ENCODE measurements at regions of chr16 and their contacts with region 1.

Region 1: GRCh38 chr16:2155091-2156021 is at the start of gene TRAF7:
- DNase-seq: peak; percentile 100
- H3K4me3 ChIP-seq: peak within 1 kb of the TSS; percentile 58 to 80 (median 76)
- H3K27ac ChIP-seq: peak within 1 kb of the TSS; percentile 90 to 96 (median 94)
- H3K4me1 ChIP-seq: peaks cover 0 to 90% (median 84%) of the 10 kb centered on the region in 4 donors
- H3K27me3 ChIP-seq: no peaks in the 10 kb centered on the region
- CTCF ChIP-seq: no peak
- EP300 ChIP-seq: peak in 1 of 4 donors; percentile 59
- POLR2A ChIP-seq: peak; percentile 100
- total RNA-seq, gene TRAF7: 30.3 to 46.3 (median 34.9) TPM

Region 2: DNA sequence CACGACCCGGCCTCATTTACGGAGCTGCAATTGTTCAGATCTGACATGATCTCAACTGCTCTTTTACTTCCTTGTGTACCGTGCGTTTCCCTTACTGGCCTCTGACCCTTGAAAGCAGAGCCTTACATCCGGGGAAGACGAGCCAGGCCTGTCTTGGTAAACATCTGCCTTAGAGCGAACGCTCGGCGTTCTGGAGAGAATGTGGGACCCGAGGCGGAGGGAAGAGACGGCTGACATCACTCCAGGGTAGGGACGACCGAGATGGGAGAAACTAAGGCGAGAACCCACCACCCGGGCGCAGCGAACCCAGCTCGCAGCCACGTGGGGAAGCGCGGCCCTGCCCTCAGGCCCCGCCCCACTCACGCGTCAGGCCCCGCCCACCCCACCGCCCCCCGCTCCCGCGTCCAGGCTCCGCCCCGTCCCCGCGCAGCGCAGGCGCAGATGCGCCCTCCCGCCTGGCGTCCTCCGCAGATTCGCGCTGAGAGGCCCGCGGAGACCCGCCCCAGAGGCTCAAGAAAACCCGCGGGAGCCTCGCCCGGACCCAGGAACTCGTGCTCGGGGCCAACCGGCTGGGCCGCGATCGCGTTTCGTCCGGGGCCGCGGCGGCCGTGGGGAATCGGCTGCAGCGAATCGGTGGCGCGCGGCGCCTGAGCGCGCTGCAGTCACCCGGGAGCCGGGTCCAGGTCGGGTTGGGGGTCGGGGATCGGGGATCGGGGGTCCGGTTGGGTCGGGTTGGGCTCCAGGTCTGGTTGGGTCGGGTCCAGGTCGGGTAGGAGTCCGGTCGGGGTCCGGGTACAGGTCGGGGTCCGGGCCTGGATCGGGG is 662.2 kb before region 1 on chr16 and contains the start of gene TELO2:
- intact Hi-C with region 1: no loop called
- DNase-seq: peak; percentile 89
- H3K4me3 ChIP-seq: peak within 1 kb of the TSS; percentile 72 to 84 (median 79)
- H3K27ac ChIP-seq: peak within 1 kb of the TSS; percentile 87 to 93 (median 88)
- H3K4me1 ChIP-seq: peaks cover 0 to 30% (median 25%) of the 10 kb centered on the region in 4 donors
- H3K27me3 ChIP-seq: no peaks in the 10 kb centered on the region
- CTCF ChIP-seq: no peak
- EP300 ChIP-seq: no peak
- POLR2A ChIP-seq: no peak
- total RNA-seq, gene TELO2: 12.5 to 31.3 (median 18.1) TPM

Region 3: DNA sequence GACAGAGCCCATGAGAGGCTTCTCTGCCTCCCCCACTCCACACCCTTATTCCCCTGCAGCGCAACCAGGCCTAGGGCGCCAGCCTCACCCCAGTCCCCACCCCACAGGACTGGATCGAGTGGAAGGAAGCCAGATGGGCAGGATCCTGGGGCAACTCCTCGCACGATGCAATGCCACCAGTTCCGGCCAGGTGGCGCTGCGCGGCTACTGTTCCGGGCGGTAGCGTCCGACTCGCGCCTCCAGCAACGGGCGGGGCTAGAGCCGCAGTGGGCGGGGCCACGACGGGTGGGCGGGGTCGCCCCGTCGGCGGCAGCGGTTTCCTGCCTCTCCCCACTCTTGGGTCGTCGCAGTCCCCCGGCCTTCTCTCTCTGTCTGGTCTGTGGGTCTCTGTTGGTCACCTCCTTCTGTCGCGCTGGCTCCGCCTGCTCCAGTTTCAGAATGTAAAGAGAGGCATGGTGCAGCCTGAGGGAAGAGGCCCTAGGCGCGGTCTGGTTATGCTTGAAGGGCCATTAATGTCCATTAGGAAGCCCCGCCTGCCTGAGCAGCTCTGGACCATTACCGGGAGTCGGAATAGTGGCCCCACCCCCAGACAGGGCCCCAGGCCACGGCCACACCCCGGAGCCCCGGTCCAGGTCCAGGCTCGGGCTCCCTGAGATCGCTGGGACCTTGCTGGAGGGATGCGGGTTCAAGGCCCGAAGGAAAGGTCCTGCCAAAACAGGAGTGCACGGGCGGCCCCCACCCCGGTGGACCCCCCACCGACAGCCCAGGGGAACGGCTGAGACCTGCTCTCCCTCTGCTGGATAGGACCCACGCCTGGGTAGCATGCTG is 132.0 kb before region 1 on chr16:
- intact Hi-C with region 1: loop called (anchors 2 kb)
- DNase-seq: peak; percentile 96
- H3K4me3 ChIP-seq: peak overlapping the region; percentile 8 to 44 (median 36)
- H3K27ac ChIP-seq: peak overlapping the region; percentile 64 to 78 (median 71)
- H3K4me1 ChIP-seq: peaks cover 4 to 57% (median 51%) of the 10 kb centered on the region in 4 donors
- H3K27me3 ChIP-seq: peaks cover 25 to 36% (median 33%) of the 10 kb centered on the region in 3 donors
- CTCF ChIP-seq: peak; percentile 95 to 98 (median 96)
- EP300 ChIP-seq: no peak
- POLR2A ChIP-seq: no peak

Region 4: GRCh38 chr16:2142942-2143877 is 12.1 kb before region 1 on chr16:
- intact Hi-C with region 1: loop called (anchors 2 kb)
- DNase-seq: no peak
- H3K4me3 ChIP-seq: no peak overlapping the region
- H3K27ac ChIP-seq: no peak overlapping the region
- H3K4me1 ChIP-seq: peaks cover 0 to 16% (median 9%) of the 10 kb centered on the region in 4 donors
- H3K27me3 ChIP-seq: no peaks in the 10 kb centered on the region
- CTCF ChIP-seq: no peak
- EP300 ChIP-seq: no peak
- POLR2A ChIP-seq: no peak

Region 5: GRCh38 chr16:2205104-2205966 is 50.0 kb after region 1 on chr16 and contains the start of gene MLST8:
- intact Hi-C with region 1: loop called (anchors 2 kb)
- DNase-seq: peak; percentile 94
- H3K4me3 ChIP-seq: peak within 1 kb of the TSS; percentile 83 to 89 (median 88)
- H3K27ac ChIP-seq: peak within 1 kb of the TSS; percentile 97 to 100 (median 98)
- H3K4me1 ChIP-seq: peaks cover 0 to 20% (median 18%) of the 10 kb centered on the region in 4 donors
- H3K27me3 ChIP-seq: no peaks in the 10 kb centered on the region
- CTCF ChIP-seq: no peak
- EP300 ChIP-seq: peak in 1 of 4 donors; percentile 8
- POLR2A ChIP-seq: peak; percentile 54 to 71
- total RNA-seq, gene MLST8: 30.6 to 48.5 (median 37.1) TPM

Region 6: DNA sequence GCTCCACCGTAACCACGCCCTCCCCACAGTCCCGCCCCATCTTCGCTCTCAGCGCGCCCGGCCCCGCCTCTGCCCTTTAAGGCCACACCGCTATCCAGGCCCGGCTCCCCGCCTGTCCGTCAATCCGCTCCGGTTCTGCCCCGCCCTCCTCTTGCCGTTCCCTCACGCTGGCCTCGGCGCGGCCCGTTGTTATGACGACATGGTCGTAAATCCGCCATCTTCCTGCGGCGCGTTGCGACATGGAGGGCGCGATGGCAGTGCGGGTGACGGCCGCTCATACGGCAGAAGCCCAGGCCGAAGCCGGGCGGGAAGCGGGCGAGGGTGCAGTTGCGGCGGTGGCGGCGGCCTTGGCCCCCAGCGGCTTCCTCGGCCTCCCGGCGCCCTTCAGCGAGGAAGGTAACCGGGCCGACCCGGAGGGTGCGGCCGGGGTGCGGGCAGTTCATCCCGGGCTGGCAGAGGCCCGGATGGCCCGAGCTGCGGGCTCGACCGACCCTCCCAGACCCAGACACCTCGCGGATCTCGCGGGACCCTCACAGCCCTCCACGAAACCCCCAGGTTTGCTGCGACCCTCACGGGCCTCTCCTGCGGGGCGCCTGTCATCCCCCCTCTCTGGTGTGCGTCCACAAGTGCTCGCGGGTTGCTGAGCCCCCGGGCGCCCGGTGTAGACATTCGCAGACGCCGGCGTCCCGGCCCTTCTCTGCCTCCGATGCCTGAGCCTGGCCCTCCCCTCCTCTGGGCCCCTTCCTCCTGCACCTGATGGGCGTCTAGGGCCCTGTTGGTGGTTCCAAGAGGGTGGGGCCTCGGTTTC is 68.2 kb after region 1 on chr16 and contains the start of gene E4F1:
- intact Hi-C with region 1: loop called (anchors 2 kb)
- DNase-seq: peak; percentile 100
- H3K4me3 ChIP-seq: peak within 1 kb of the TSS; percentile 80 to 98 (median 98)
- H3K27ac ChIP-seq: peak within 1 kb of the TSS; percentile 85 to 95 (median 92)
- H3K4me1 ChIP-seq: peaks cover 0 to 33% (median 26%) of the 10 kb centered on the region in 4 donors
- H3K27me3 ChIP-seq: no peaks in the 10 kb centered on the region
- CTCF ChIP-seq: no peak
- EP300 ChIP-seq: peak in 1 of 4 donors; percentile 37
- POLR2A ChIP-seq: peak; percentile 88 to 92
- total RNA-seq, gene E4F1: 17.4 to 26.9 (median 22.0) TPM

Region 7: GRCh38 chr16:2251483-2252240 is 96.3 kb after region 1 on chr16 and contains the start of gene ECI1:
- intact Hi-C with region 1: loop called (anchors 2 kb)
- DNase-seq: peak; percentile 98
- H3K4me3 ChIP-seq: peak within 1 kb of the TSS; percentile 63 to 75 (median 70)
- H3K27ac ChIP-seq: peak within 1 kb of the TSS; percentile 90 to 94 (median 92)
- H3K4me1 ChIP-seq: peaks cover 0 to 27% (median 23%) of the 10 kb centered on the region in 4 donors
- H3K27me3 ChIP-seq: no peaks in the 10 kb centered on the region
- CTCF ChIP-seq: peak; percentile 66 to 76 (median 70)
- EP300 ChIP-seq: no peak
- POLR2A ChIP-seq: peak; percentile 55 to 71
- total RNA-seq, gene ECI1: 50.2 to 87.2 (median 67.0) TPM